Left colon (tissue), 2 donors: ENCODE measurements at regions of chr12 and their contacts with region 1.

Region 1: DNA sequence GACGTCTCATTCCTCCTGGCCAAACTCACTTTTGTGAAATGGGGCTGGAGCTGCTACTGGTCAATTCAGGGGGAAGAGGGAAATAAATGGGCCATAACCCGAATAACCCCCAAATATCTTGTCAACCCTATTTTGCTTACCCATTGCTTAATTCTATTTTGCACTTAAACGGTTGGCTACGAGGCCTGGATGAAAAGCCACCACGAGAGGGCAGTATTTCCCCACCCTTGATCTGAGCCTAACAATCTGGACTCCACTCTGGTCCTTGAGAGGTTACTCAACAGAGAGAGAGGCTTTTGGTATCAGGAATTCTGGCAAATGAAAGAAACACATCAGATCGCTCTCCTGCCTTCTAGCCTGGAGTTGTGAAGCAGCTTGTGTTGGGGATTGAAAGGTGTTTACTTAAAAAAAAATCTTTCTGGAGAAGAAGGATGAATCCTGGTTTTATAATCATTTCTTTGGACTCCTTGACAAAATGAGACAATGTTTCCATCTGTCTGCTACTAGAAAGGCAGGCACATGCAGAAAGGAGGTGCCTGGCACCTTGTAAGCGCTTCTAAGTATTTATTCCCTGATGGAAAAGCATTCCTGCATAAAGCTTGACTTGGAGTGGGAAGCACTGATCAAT is 22.4 kb upstream of the FBXO21 start:
- DNase-seq: peak in 1 of 2 donors; percentile 73
- ATAC-seq: peak; percentile 65

Region 2: DNA sequence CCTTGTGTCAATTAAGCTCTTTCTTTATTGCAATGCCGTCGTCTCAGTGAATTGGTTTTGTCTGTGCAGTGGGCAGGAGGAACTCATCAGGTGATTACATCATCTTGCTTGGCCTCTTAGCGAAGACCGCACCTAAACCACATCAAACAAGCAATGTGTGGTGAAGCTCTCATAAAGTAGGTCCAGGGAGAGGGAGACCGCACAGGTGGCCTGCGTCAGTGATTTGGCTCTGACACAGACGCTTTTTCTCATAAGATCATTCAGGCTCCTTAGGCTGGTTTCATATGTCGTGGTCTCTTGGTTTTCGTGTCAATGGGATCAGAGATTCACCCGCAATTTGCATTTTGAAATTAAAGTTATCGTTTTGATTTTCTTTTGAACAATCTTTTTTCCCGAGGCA is 106.8 kb before region 1 on chr12:
- intact Hi-C with region 1: no loop called
- DNase-seq: peak; percentile 36 to 38
- ATAC-seq: peak; percentile 99

Region 3: DNA sequence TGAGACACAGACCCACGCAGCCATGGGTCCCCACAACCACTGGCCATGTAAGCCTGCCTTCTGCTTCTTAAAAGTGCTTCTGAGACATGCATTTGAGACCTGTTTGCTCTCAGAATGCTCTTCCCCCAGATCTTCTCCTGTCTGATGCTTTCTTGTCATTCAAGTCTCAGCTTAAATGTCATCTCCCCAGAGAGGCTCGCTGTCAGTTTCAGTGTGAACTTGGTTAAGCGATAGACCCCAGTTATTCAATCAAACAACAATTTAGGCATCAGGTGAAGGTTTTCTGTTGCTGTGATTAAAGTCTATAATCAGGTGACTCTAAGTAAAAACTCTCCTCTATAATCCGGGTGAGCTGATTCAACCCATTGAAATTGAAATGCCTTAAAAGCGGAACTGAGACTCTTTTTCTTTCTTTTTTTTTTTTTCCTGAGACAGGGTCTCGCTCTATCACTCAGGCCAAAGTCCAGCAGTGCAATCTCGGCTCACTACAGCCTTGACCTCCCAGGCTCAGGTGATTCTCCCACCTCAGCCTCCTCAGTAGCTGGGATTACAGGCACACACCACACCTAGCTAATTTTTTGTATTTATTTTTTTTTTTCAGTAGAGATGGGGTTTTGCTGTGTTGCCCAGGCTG is 632.7 kb after region 1 on chr12:
- intact Hi-C with region 1: loop called in 1 of 2 experiments (anchors 10 kb)
- DNase-seq: no peak
- ATAC-seq: no peak

Region 4: GRCh38 chr12:118357257-118358007 is 1144.8 kb after region 1 on chr12:
- intact Hi-C with region 1: no loop called
- DNase-seq: peak; percentile 49 to 51
- ATAC-seq: peak; percentile 75